GM23248 (cell line): ENCODE measurements at regions of chr11 and their contacts with region 1.

Region 1: DNA sequence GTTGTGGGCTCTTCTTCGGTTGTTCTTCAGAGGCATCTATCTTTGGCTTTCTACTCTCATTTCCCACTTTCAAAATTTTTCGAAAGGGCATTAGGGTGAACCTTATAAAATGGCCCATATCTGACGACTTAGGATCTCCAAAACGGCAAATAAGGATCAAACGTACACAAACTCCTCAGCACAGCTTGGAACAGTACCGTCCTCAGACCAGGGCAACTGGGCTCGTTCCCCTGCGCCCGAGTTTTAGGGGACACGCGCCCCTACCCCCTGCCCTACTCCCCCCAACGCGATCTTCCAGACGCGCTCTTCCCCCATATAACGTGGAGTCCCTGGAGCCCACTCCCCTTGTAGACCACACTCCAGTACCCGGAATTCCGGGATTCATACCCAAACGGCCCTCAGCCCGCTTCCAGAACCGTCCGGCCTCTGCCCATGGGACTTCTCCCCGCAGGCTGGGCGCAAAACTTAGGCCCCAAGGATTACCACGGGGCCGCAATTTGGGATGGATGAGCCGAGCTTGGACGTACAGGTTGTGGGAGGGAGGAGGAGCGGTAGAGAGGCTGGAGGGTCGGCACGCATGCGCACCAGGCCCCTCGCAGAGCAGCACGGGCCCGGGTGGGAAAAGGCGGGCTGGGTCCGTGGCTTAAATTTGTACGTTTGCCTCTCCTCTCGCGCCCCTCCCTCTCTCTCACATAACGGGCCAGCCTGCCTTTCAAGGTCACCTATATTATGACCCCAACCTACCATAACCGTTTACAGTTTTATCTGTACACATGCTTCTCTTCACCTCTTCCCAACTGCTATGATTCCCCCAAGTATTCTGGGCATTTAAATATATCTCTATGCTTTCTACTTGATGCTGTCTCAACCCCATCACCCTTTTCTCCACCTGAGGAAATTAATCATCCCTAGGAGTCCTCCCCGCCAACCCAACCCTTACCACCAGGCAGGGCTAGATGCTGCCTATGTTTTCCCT is 3.4 kb downstream of the CCDC89 start:
- DNase-seq: peak; percentile 85
- H3K4me3 ChIP-seq: peak overlapping the region; percentile 78
- H3K27ac ChIP-seq: no peak overlapping the region
- H3K4me1 ChIP-seq: peaks cover 24% of the 10 kb centered on the region
- H3K27me3 ChIP-seq: no peaks in the 10 kb centered on the region

Region 2: DNA sequence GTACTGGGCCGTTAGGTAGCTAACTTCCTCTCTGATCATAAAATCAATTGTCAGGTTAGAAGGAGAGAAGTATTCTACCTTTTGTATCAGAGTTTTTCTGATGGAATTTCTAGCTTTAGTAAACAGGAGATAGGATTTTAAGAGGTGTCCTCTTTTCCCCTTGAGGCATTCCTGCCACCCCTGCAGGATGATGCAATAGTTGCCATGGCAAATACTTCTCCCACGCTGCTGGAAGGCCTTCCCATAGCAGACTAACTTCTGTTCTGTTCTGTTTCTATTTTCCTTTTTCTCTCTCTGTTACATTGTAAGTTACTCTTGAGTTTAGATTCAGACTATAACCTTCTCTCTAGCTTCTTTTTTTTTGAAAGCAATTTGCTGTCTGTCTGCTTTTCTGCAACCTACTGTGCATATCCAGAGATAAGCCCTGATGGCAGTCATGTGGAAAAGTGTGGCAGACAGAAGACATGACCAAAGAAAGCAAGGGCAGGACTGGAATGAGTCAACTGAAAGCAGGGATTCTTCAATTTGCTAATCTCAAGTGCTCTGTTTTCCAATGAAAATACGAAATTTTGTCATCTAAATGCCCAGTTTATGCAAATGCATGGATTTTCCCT is 734.5 kb before region 1 on chr11:
- in situ Hi-C with region 1: no loop called
- DNase-seq: peak; percentile 69
- H3K4me3 ChIP-seq: no peak overlapping the region
- H3K27ac ChIP-seq: peak overlapping the region; percentile 42
- H3K4me1 ChIP-seq: peaks cover 12% of the 10 kb centered on the region
- H3K27me3 ChIP-seq: no peaks in the 10 kb centered on the region

Region 3: GRCh38 chr11:85826116-85826855 is 143.7 kb after region 1 on chr11:
- in situ Hi-C with region 1: loop called (anchors 10 kb)
- DNase-seq: peak; percentile 65
- H3K4me3 ChIP-seq: no peak overlapping the region
- H3K27ac ChIP-seq: no peak overlapping the region
- H3K4me1 ChIP-seq: peaks cover 28% of the 10 kb centered on the region
- H3K27me3 ChIP-seq: no peaks in the 10 kb centered on the region

Region 4: GRCh38 chr11:85955531-85955930 is 272.9 kb after region 1 on chr11:
- in situ Hi-C with region 1: loop called (anchors 25 kb)
- DNase-seq: peak; percentile 84
- H3K4me3 ChIP-seq: no peak overlapping the region
- H3K27ac ChIP-seq: peak overlapping the region; percentile 64
- H3K4me1 ChIP-seq: peaks cover 38% of the 10 kb centered on the region
- H3K27me3 ChIP-seq: no peaks in the 10 kb centered on the region

Region 5: GRCh38 chr11:86116386-86116726 is 433.7 kb after region 1 on chr11:
- in situ Hi-C with region 1: no loop called
- DNase-seq: peak; percentile 90
- H3K4me3 ChIP-seq: peak overlapping the region; percentile 47
- H3K27ac ChIP-seq: peak overlapping the region; percentile 90
- H3K4me1 ChIP-seq: peaks cover 34% of the 10 kb centered on the region
- H3K27me3 ChIP-seq: no peaks in the 10 kb centered on the region